Upper lobe of right lung (tissue), 1 donor: ENCODE measurements at regions of chr20 and their contacts with region 1.

Region 1: DNA sequence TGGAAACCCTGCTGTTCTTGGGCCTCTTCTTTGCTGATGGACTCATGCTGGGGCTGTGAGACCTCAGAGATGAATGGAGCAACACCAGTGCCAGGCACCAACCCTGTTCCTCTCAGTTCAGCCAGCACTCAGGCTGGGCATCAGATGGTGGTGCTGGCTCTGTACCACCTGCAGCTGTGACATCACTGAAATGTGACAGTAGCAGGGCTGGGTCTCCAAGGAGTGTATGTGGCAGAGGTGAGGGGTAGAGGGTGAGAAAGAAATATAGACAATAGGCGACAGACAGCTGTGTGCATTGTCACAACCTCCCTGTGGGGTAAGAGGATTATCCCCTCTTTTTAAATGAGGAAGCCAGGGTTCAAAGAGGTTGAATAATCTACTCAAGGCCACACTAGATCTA is at the start of gene TP53TG5:
- DNase-seq: no peak
- ATAC-seq: no peak
- H3K4me3 ChIP-seq: no peak within 1 kb of the TSS
- H3K27ac ChIP-seq: no peak within 1 kb of the TSS
- H3K4me1 ChIP-seq: peaks cover 3% of the 10 kb centered on the region
- H3K27me3 ChIP-seq: no peaks in the 10 kb centered on the region
- CTCF ChIP-seq: no peak
- total RNA-seq, gene TP53TG5: not detected

Region 2: DNA sequence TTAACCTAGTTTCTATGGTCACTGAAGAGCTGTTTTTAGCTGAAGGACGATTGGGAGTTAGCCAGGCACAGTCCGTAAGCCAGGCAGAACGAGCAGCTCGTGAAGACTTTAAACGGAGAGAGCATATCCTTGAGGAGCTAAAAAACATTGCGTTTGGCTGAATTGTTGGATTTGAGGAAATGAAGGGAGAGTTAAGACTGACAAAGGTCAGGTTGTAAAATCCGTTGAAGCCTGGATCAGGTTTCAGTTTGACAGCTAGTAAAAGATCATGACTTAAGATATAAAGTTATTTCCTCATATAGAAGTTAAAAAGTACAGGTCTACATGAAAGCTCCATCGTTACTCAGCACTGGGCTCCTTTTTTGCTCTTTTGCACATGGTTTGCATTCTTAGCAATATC is 32.7 kb after region 1 on chr20:
- intact Hi-C with region 1: loop called (anchors 5 kb)
- DNase-seq: no peak
- ATAC-seq: no peak
- H3K4me3 ChIP-seq: no peak overlapping the region
- H3K27ac ChIP-seq: no peak overlapping the region
- H3K4me1 ChIP-seq: peaks cover 14% of the 10 kb centered on the region
- H3K27me3 ChIP-seq: no peaks in the 10 kb centered on the region
- CTCF ChIP-seq: no peak